ENCODE measurements at regions of chr3 and their contacts with region 1.

Region 1: GRCh38 chr3:69872783-69873378 is 126.7 kb upstream of the SAMMSON start:
- DNase-seq: no peak

Region 2: GRCh38 chr3:69051756-69052471 is 821.0 kb before region 1 on chr3 and contains the start of gene TMF1:
- intact Hi-C with region 1: no loop called
- DNase-seq: peak; percentile 100
- total RNA-seq, gene TMF1: 30.7 to 41.0 TPM

Region 3: GRCh38 chr3:69490235-69490634 is 382.6 kb before region 1 on chr3:
- intact Hi-C with region 1: no loop called
- DNase-seq: no peak

Region 4: DNA sequence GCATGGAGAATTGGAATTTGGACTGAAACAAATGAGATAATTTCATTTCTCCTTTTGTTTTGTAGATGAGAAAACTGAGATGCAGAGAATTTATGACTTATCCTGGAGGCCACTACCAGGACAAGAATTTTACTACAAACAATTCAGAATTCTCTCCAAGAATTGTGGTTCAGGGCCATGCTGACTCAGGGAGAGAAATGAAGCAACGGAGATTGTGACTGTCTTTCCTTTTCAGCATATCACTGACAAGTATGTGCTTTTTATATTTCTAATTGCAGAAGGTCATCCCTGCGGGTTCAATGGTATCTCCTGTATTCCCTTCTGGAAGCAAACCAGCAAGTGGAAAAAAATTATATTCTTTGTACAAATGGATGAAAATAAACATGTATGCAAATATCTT is 304.4 kb before region 1 on chr3:
- intact Hi-C with region 1: no loop called
- DNase-seq: no peak

Region 5: DNA sequence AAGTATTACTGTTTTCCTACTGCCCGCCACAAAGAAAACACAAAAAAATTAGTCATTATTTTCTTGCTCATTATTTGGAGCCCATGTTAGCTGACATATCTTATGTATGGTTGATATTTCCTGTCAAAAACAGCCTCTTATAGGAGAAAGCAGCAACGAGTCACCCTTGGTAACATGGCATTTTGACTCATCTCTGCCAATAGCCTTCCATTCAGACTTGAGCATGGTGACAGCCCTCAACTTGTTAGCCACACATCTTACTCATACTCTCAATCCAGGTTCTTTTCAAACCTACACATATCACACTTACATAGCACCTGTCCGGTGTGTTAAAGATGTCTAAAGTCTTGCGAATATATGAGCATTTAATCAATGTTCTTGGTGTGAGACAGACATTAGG is 17.2 kb after region 1 on chr3:
- intact Hi-C with region 1: loop called in 1 of 2 experiments (anchors 1 kb)
- DNase-seq: no peak

Measured in posterior vena cava (tissue), 2 donors.